Activated B cell treated with CpG ODN at 0.5 μM for 24 hours (primary cell): ENCODE measurements at regions of chrX and their contacts with region 1.

Region 1: DNA sequence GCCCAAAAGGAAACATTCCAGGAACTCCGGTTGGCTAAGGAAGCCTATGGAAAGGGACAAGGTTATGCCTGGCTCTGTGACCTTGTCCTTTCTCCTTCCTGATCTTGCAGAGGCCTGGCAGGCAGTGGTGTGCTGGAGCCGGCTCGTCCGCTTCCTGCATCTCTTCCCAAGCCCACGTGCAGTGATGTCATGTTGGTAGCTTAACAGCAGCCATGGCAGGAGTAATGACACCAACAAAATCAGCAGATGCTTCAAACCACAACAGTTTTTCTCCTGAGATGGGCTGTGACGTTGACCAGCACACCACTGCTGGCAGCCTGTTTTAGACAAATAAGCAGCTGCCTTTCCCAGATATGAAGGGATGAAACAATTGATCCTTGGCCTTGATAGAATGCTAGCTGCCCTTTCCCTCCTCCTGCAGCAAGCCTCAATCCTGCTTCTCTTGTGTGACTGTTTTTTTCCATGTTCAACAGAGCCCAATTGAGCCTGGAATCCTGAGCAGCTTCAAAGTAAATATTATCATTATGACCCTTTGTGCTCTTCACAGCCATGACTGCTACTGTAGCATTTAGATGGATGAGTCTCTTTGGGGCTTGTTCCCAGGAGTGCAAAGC is 23.4 kb downstream of the SEPTIN6 start:
- DNase-seq: no peak
- ATAC-seq: no peak
- H3K4me3 Mint-ChIP-seq: no peak overlapping the region
- H3K27ac Mint-ChIP-seq: no peak overlapping the region
- H3K4me1 Mint-ChIP-seq: peaks cover 36% of the 10 kb centered on the region
- H3K27me3 Mint-ChIP-seq: no peaks in the 10 kb centered on the region
- CTCF ChIP-seq: no peak

Region 2: DNA sequence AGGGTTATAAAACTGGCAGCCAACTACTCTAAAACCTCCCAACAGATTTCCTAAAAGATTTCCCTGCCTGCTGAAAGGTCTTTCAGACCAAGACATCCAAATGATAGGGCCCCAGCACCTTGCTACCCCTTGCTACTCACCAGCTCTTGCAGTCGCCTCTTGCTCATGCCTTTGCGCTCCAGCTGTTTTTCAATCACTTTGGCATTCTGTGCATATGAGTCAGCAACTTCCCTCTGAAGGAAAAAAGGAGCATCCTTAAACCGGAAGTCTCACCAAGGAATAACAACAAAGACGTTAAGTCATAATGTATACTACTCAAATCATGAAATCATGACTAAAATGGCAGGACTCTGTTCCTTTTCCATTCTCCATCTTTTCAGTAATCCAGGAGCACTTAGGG is 128.3 kb before region 1 on chrX:
- CTCF ChIA-PET with region 1: no interaction called
- POLR2A ChIA-PET with region 1: no interaction called
- intact Hi-C with region 1: no loop called
- DNase-seq: no peak
- ATAC-seq: no peak
- H3K4me3 Mint-ChIP-seq: no peak overlapping the region
- H3K27ac Mint-ChIP-seq: no peak overlapping the region
- H3K4me1 Mint-ChIP-seq: no peaks in the 10 kb centered on the region
- H3K27me3 Mint-ChIP-seq: no peaks in the 10 kb centered on the region
- CTCF ChIP-seq: no peak

Region 3: GRCh38 chrX:119638725-119639471 is 30.6 kb before region 1 on chrX:
- CTCF ChIA-PET with region 1: no interaction called
- POLR2A ChIA-PET with region 1: no interaction called
- intact Hi-C with region 1: loop called (anchors 2 kb)
- DNase-seq: no peak
- ATAC-seq: peak; percentile 73
- H3K4me3 Mint-ChIP-seq: peak overlapping the region; percentile 56
- H3K27ac Mint-ChIP-seq: peak overlapping the region; percentile 93
- H3K4me1 Mint-ChIP-seq: peaks cover 62% of the 10 kb centered on the region
- H3K27me3 Mint-ChIP-seq: no peaks in the 10 kb centered on the region
- CTCF ChIP-seq: no peak

Region 4: GRCh38 chrX:119647552-119648420 is 21.7 kb before region 1 on chrX:
- CTCF ChIA-PET with region 1: no interaction called
- POLR2A ChIA-PET with region 1: interaction called, 4 read pairs
- intact Hi-C with region 1: loop called (anchors 2 kb)
- DNase-seq: no peak
- ATAC-seq: peak; percentile 89
- H3K4me3 Mint-ChIP-seq: peak overlapping the region; percentile 45
- H3K27ac Mint-ChIP-seq: peak overlapping the region; percentile 93
- H3K4me1 Mint-ChIP-seq: peaks cover 28% of the 10 kb centered on the region
- H3K27me3 Mint-ChIP-seq: no peaks in the 10 kb centered on the region
- CTCF ChIP-seq: no peak

Region 5: GRCh38 chrX:119685225-119686066 is 15.9 kb after region 1 on chrX:
- CTCF ChIA-PET with region 1: interaction called, 3 read pairs
- POLR2A ChIA-PET with region 1: interaction called, 27 read pairs
- intact Hi-C with region 1: loop called (anchors 2 kb)
- DNase-seq: no peak
- ATAC-seq: peak; percentile 65
- H3K4me3 Mint-ChIP-seq: peak overlapping the region; percentile 83
- H3K27ac Mint-ChIP-seq: peak overlapping the region; percentile 99
- H3K4me1 Mint-ChIP-seq: peaks cover 89% of the 10 kb centered on the region
- H3K27me3 Mint-ChIP-seq: no peaks in the 10 kb centered on the region
- CTCF ChIP-seq: no peak

Region 6: DNA sequence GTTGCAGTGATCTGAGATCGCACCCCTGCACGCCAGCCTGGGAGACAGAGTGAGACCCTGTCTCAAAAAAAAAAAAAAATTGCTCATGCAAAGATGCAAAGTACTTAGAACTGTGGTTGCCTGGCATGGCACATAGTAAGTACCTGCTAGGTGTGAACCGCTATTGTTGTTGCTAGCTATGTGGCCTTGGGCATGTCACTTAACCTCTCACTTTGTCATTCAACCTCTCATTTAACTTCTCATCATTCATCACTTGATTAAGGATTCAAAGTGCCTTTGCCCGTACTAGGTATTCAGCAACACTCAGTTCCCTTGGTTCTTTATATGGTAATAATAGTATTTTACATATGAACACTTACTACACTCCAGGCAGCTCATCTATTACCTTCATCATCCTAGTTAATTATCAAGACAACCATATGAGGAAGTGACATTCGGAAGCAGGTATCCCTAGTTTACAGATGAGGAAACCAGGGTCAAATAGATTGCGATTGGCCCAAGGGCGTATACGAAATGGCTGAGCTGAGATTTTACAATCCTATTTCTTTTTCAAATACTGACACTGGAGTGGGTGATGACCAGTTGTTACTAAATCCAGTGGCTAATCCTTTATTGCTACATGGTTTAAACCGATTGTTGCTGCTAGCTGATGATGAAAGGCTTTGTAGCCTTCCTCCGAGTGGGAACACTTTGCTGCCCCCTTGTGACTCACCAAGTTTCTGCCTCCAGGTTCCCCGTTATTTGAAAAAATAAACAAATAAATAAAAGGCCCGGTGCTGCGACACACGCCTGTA is 60.1 kb after region 1 on chrX:
- CTCF ChIA-PET with region 1: interaction called, 5 read pairs
- POLR2A ChIA-PET with region 1: interaction called, 5 read pairs
- intact Hi-C with region 1: loop called (anchors 5 kb)
- DNase-seq: peak; percentile 30
- ATAC-seq: peak; percentile 57
- H3K4me3 Mint-ChIP-seq: no peak overlapping the region
- H3K27ac Mint-ChIP-seq: no peak overlapping the region
- H3K4me1 Mint-ChIP-seq: peaks cover 2% of the 10 kb centered on the region
- H3K27me3 Mint-ChIP-seq: no peaks in the 10 kb centered on the region
- CTCF ChIP-seq: no peak

Region 7: GRCh38 chrX:120697053-120697452 is 1027.5 kb after region 1 on chrX:
- CTCF ChIA-PET with region 1: no interaction called
- POLR2A ChIA-PET with region 1: no interaction called
- intact Hi-C with region 1: no loop called
- DNase-seq: no peak
- ATAC-seq: no peak
- H3K4me3 Mint-ChIP-seq: no peak overlapping the region
- H3K27ac Mint-ChIP-seq: no peak overlapping the region
- H3K4me1 Mint-ChIP-seq: no peaks in the 10 kb centered on the region
- H3K27me3 Mint-ChIP-seq: no peaks in the 10 kb centered on the region
- CTCF ChIP-seq: no peak